Common myeloid progenitor, CD34-positive (primary cell): ENCODE measurements at regions of chr5 and their contacts with region 1.

Region 1: DNA sequence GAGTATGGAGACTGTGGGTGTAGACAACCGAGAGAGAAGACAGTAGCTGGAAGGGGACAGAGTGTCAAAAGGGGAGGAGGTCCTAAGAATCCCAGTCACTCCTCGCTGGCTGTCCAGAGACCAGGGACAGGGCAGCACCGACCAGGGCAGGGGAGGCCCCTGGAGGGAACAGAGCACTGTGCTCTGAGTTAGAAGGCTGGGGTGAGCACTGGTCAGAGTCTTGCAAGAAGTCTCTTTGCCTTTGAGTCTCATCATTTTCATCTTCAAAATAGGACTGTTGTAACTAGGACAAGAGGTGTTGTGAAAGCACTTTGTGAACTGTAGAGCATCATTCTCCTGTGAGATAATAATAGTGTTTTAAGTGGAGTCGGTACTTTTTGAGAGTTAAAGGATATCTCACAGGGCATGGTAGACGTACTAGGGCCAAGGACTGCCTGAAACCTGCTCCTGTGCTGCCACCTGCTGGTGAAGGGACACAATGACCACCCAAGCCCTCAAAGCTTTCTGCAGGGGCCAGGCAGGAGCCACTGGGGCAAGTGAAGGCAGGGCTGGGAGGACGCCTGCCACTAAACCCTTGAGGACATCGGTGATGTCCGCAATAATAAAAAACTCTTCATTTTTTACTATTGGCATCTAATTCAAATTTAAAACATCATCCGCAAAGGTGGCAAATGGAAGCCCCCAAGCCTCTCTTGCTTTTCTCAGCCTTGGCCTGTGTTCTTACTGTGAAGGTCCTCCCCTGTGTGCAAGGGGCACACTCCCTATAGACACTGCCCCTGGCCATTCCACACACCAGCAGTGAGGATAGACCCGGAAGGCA is 28.2 kb downstream of the SLC6A7 start:
- DNase-seq: peak; percentile 80 to 91 (median 87)
- H3K4me3 ChIP-seq: no peak overlapping the region
- H3K27ac ChIP-seq: no peak overlapping the region
- H3K4me1 ChIP-seq: no peaks in the 10 kb centered on the region
- H3K27me3 ChIP-seq: peaks cover 0 to 23% (median 8%) of the 10 kb centered on the region in 5 experiments

Region 2: GRCh38 chr5:150129813-150130492 is 88.1 kb before region 1 on chr5:
- CTCF ChIA-PET with region 1: interaction called, 104 read pairs
- POLR2A ChIA-PET with region 1: interaction called, 5 read pairs
- DNase-seq: peak; percentile 57 to 70 (median 59)
- H3K4me3 ChIP-seq: no peak overlapping the region
- H3K27ac ChIP-seq: no peak overlapping the region
- H3K4me1 ChIP-seq: peaks cover 0 to 19% (median 12%) of the 10 kb centered on the region in 4 experiments
- H3K27me3 ChIP-seq: no peaks in the 10 kb centered on the region

Region 3: DNA sequence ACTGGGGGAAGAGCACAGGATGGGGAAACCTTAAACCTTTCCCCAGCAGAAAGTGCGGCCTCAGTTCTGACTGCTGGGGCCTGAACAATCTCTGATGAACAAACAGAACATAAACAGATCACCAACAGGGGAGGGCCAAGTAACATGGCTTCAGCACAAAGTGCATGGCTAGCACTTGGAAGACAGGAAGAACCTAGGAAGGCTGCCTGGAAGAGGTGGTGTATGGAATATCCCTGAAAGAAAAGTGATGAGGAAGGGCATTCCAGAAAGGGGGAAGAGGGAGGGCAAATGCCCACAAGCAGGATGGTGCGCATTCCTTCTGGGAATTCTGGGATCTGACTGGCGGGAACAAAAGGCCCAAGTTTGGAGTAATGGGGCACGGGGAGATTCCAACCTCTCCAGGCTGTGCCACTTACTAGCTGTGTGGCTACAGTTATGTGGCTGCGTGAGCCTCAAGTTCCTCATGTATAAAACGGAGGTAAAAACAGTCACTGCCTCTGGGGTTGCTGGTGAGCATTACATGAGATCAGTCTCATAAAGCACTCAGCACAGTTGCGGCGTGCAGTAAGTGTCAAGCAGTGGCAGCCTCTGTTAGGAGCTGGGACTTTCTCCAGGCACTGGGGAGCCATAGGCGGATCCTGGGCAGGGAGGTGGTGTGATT is 64.0 kb before region 1 on chr5:
- CTCF ChIA-PET with region 1: interaction called, 10 read pairs
- POLR2A ChIA-PET with region 1: interaction called, 3 read pairs
- DNase-seq: peak; percentile 23 to 81 (median 70)
- H3K4me3 ChIP-seq: no peak overlapping the region
- H3K27ac ChIP-seq: no peak overlapping the region
- H3K4me1 ChIP-seq: peaks cover 0 to 30% (median 10%) of the 10 kb centered on the region in 4 experiments
- H3K27me3 ChIP-seq: peaks cover 0 to 2% (median 0%) of the 10 kb centered on the region in 5 experiments

Region 4: DNA sequence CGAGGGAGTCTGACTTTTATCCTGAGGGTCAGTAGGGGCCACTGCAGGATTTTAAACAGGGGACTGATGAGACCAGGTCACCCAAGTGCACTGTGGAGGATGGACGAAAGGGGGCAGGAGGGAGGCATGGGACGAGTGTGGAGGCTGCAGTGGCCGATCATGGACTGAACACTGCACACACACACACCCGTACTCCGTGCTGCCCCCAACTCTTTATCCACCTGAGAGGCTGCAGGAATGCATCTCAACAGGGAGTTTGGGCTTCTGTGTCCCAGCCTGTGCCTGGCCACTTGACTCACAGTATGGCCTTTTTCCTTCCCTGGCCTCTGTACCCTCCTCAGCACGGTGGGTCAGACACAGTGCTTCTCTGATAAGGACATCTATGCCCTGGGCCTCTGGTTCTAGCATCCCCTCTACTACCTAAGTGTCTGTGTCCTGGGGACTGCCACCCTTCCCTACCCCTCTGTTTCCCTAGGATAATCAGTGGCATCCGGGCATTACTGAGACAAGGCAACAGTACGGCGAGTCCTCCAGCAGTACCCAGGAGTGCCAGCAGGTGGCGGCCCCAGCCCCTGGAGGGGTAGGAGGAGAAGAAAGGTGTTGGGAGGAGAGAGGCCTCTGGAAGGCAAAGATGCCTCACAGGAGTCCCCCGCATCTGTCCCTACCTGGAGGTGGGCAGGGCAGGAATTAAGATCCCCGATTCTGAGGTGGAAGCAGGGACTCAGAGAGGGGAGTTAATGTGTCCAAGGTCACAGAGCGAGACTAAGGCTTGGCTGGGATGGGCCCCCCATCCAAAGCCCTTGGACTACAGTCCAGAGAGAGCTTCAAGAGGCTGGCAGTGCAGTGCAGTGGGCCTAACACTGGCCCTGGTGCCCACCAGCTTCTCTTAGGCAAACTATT is 56.6 kb before region 1 on chr5:
- CTCF ChIA-PET with region 1: interaction called, 16 read pairs
- POLR2A ChIA-PET with region 1: no interaction called
- DNase-seq: peak; percentile 48 to 69 (median 54)
- H3K4me3 ChIP-seq: no peak overlapping the region
- H3K27ac ChIP-seq: no peak overlapping the region
- H3K4me1 ChIP-seq: peaks cover 0 to 24% (median 4%) of the 10 kb centered on the region in 4 experiments
- H3K27me3 ChIP-seq: peaks cover 3 to 14% (median 8%) of the 10 kb centered on the region in 5 experiments

Region 5: GRCh38 chr5:150497274-150497988 is 279.3 kb after region 1 on chr5:
- CTCF ChIA-PET with region 1: no interaction called
- POLR2A ChIA-PET with region 1: no interaction called
- DNase-seq: no peak
- H3K4me3 ChIP-seq: no peak overlapping the region
- H3K27ac ChIP-seq: no peak overlapping the region
- H3K4me1 ChIP-seq: peaks cover 0 to 7% (median 2%) of the 10 kb centered on the region in 4 experiments
- H3K27me3 ChIP-seq: no peaks in the 10 kb centered on the region